ENCODE measurements at regions of chr4 and their contacts with region 1.

Region 1: DNA sequence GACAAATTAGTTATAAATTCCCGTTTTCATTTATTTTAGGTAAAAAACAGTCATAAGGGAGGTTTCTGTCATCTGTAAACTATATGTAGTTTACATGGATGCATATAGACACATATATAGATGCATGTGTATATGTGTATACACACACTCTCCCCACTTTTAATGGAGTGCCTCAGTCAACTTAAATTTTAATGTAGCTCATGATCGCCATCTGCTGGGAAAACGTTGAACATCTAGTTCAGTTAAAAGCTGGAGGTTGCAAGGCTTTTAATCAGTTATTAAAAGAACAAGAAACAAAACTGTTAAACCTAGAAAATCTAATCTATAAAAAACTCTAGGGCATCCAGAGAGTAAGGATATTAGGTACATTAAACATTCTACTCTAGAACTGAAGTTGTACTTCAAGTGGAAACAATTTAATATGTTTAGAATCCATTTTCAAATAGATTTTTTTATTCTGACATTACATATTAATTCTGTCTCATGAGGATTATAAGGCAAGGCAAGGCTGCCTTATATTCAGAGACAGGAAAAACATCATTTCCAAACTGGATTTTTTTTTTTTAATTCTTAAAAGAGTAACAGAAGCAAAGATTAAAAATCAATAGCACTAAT is 122.6 kb downstream of the SHISA3 start:
- DNase-seq: no peak

Region 2: GRCh38 chr4:41934815-41935651 is 584.9 kb before region 1 on chr4 and contains the start of gene TMEM33:
- intact Hi-C with region 1: no loop called
- DNase-seq: peak; percentile 94
- total RNA-seq, gene TMEM33: 27.2 TPM

Region 3: DNA sequence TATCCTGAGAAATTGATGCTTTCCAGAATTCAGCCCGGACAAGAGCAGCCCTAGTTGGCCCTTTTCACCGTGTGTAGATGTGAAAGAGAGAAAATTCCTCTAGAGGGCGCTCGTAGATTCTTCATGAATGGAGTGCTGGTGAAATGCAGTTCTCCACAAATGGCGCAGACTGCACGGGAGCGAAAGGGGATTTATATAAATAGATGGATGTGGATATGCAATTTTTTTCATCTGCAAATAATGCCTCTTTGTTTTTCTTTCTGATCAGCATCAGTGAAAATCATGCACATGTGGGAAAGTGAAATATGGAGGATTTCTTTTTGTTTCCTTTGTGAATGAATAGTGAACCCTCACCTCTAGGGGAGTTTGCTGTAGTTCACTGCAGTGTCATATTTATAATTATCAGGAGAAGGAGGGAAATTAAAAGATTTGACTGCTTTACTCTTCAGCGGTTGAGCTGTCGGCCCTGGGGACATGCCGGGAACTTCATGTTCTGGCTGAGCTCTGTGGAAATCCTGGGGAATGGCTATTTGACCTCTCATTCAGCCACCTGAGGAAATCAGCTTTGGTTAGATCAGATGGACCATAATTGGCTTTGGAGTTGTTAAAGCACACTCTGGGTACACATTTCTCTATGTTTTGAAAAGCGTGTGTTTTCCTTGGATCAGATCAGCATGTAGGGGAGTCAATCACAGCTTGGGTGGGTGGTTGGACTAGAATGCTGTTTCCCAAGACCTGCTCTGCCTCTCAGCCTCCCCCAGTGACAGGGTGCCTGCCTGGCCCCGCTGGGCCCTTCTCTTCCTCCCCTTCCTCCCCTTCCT is 237.6 kb before region 1 on chr4:
- intact Hi-C with region 1: loop called (anchors 1 kb)
- DNase-seq: no peak

Region 4: GRCh38 chr4:42371306-42372252 is 148.3 kb before region 1 on chr4:
- intact Hi-C with region 1: loop called (anchors 2 kb)
- DNase-seq: no peak

Measured in cardiac septum (tissue), 1 donor.